ENCODE measurements at regions of chr10 and their contacts with region 1.

Region 1: DNA sequence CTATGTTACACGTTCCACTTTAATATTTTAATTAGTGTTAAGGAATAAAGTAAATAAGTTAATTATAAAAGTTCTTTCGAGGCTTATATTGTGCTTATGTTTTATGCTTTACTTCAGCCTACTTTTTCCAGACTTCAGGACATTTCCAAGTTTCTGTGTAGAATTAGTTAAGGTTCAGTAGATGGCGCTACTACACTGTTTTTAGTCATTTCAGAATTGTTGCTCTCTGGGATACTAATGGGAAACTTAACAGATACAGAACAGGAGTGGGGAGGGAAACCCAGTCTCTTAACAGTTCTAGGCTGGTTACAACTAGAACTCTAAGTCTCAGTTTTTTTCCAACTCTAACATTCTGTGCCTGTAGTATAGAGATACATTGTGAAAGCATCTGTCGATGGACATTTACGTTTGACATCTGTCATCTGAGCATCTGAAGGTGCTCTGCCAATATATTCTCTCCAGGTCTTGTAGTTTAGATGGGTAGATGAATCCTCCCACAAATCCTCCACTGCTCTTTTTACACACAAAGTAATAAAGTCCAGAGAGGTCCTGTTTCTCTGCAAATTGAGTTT is 56.8 kb upstream of the FAM171A1 start:
- DNase-seq: peak; percentile 13
- H3K4me3 ChIP-seq: no peak overlapping the region
- H3K27ac ChIP-seq: no peak overlapping the region
- H3K27me3 ChIP-seq: peaks cover 4% of the 10 kb centered on the region
- CTCF ChIP-seq: peak; percentile 57

Region 2: GRCh38 chr10:15439341-15439842 is 11.5 kb after region 1 on chr10:
- CTCF ChIA-PET with region 1: interaction called, 34 read pairs
- POLR2A ChIA-PET with region 1: no interaction called
- DNase-seq: no peak
- H3K4me3 ChIP-seq: peak overlapping the region; percentile 50
- H3K27ac ChIP-seq: no peak overlapping the region
- H3K27me3 ChIP-seq: peaks cover 2% of the 10 kb centered on the region
- CTCF ChIP-seq: peak; percentile 58

Region 3: DNA sequence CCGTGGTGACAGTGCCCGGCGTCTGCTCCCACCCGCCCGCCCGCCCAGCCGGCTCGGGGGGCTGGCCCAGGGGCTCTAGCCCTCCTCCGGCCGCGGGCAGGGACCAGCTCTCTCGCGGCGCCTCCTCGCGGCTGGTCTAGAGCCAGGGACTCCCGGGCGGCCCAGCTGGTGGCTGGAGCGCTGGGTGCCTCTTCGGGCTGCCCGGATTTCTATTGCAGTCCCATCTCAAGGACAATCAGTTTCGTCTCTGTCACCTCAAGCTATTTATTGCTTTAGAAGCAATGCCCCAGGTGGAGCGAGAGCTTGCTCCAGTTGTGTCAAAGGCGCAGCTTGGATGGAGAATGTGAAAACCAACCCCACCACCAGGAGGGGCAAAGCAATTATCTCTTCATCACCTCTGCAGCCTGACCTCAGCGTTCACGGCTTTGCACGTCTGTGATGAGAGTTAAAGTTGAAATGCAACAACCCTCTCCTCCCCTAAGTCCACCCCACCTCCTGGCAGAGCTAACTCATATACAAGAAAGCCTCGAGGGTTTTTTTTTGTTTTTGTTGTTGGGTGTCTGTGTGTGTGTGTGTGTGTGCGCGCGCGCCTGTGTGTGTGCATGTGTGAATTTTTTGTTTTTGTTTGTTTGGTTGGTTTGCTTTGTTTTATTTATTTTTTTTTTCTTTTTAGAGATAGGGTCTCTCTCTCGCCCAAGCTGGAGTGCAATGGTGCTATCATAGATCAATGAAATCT is 292.1 kb after region 1 on chr10 and contains the start of gene ITGA8:
- CTCF ChIA-PET with region 1: interaction called, 37 read pairs
- POLR2A ChIA-PET with region 1: no interaction called
- DNase-seq: no peak
- H3K4me3 ChIP-seq: no peak within 1 kb of the TSS
- H3K27ac ChIP-seq: no peak within 1 kb of the TSS
- H3K27me3 ChIP-seq: peaks cover 40% of the 10 kb centered on the region
- CTCF ChIP-seq: peak; percentile 31
- polyA plus RNA-seq, gene ITGA8: 0.20 and 0.25 TPM in 2 replicates

Region 4: DNA sequence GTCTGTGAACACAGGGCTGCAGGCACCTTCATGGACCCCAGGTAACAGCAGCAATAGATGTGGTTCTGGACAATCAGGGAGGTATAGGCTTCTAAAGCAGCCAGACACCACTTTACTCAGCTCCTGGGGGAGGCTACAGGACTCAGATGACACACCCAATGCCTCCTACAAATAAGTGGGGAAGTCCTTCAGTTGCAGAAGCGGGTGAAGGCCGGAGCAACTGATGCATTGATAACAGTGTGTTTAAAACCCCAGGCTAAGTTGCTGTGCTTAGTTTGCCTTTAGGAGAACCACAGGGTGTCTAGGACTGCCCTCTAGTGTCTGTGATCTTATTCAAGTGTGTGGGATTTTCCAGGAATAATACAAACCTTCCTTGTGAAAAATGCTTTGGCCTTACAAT is 297.7 kb after region 1 on chr10:
- CTCF ChIA-PET with region 1: interaction called, 37 read pairs
- POLR2A ChIA-PET with region 1: no interaction called
- DNase-seq: peak; percentile 38
- H3K4me3 ChIP-seq: no peak overlapping the region
- H3K27ac ChIP-seq: no peak overlapping the region
- H3K27me3 ChIP-seq: peaks cover 13% of the 10 kb centered on the region
- CTCF ChIP-seq: peak; percentile 75

Region 5: GRCh38 chr10:15824498-15824897 is 396.6 kb after region 1 on chr10:
- CTCF ChIA-PET with region 1: interaction called, 12 read pairs
- POLR2A ChIA-PET with region 1: no interaction called
- DNase-seq: no peak
- H3K4me3 ChIP-seq: no peak overlapping the region
- H3K27ac ChIP-seq: no peak overlapping the region
- H3K27me3 ChIP-seq: no peaks in the 10 kb centered on the region
- CTCF ChIP-seq: peak; percentile 50

Measured in AG04450 (cell line).